ENCODE measurements at regions of chr2 and their contacts with region 1.

Region 1: DNA sequence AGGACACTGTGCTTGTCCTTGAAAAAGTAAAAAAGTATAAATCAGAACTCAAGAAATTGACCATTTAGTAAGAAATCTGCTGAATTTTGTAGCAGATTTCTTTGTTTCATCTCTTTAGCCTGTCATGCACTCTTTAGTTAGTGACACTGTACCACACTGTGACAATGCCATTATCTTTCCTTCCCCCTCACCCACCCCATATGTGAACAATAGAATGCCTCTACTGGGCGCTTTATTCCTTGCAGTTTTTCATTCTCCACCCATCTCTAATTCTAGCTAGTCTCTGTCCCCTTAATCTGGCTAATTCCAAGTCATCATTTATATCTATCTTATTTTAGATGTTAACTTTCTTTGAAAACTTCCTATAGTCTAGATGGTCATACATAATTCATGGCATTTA is 241.0 kb downstream of the LRP1B start:
- DNase-seq: no peak
- H3K4me3 ChIP-seq: no peak overlapping the region
- H3K27ac ChIP-seq: no peak overlapping the region
- H3K4me1 ChIP-seq: no peaks in the 10 kb centered on the region
- H3K27me3 ChIP-seq: no peaks in the 10 kb centered on the region
- CTCF ChIP-seq: no peak
- EP300 ChIP-seq: no peak
- POLR2A ChIP-seq: no peak

Region 2: DNA sequence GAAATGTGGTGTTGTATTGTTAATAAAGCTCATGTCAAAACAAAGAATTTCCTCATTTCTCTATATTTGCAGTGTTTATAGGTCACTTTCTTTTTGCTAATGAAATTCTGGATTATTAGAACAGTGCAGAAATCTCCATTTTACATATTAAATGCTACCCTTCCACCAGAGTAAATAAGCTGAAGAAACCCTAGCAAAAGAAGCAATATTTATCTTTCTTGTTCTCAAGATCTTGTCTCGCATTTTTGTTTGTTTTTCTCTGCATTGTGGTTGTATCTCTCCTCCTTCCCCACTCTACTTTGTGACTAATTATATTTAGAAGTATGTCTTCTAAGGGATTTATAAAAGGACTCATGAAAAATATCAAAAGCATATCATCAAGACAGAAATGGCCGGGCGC is 24.9 kb before region 1 on chr2:
- intact Hi-C with region 1: loop called in 1 of 4 experiments (anchors 1 kb)
- DNase-seq: no peak
- H3K4me3 ChIP-seq: no peak overlapping the region
- H3K27ac ChIP-seq: no peak overlapping the region
- H3K4me1 ChIP-seq: no peaks in the 10 kb centered on the region
- H3K27me3 ChIP-seq: no peaks in the 10 kb centered on the region
- CTCF ChIP-seq: no peak
- EP300 ChIP-seq: no peak
- POLR2A ChIP-seq: no peak

Region 3: GRCh38 chr2:141911485-141912066 is 21.8 kb after region 1 on chr2:
- intact Hi-C with region 1: no loop called
- DNase-seq: no peak
- H3K4me3 ChIP-seq: no peak overlapping the region
- H3K27ac ChIP-seq: no peak overlapping the region
- H3K4me1 ChIP-seq: no peaks in the 10 kb centered on the region
- H3K27me3 ChIP-seq: no peaks in the 10 kb centered on the region
- CTCF ChIP-seq: no peak
- EP300 ChIP-seq: no peak
- POLR2A ChIP-seq: no peak

Region 4: DNA sequence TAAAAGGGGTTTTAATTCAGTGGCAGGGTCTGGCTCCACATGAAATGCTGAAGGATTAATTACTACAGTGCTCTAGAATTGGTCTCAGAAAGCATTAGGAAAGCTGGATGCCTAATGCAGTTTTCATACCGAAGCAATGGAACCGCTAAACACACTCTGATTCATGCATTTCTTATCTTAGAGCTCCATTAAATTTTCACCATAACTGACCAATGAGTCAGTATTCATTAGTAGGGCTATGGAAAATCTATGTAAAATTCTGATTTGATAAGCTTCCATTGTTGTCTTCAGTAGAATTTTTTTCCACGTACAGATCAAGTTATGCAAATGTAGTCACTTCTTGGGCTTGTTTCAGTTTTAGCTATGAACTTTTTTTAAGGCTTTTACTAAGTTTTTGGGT is 1599.4 kb after region 1 on chr2:
- intact Hi-C with region 1: no loop called
- DNase-seq: no peak
- H3K4me3 ChIP-seq: no peak overlapping the region
- H3K27ac ChIP-seq: no peak overlapping the region
- H3K4me1 ChIP-seq: no peaks in the 10 kb centered on the region
- H3K27me3 ChIP-seq: no peaks in the 10 kb centered on the region
- CTCF ChIP-seq: no peak
- EP300 ChIP-seq: no peak
- POLR2A ChIP-seq: no peak

Measured in ovary (tissue), 10 donors.